Activated T-helper 1 cell treated with anti-CD3 and anti-CD28 coated beads, Interleukin-12 subunit alpha, Interleukin-12 subunit beta, Interleukin-2, Interleukin-4 antibody, amounts not matched to agents 30 ng/mL and 10 ng/mL and 1 ng/mL, durations not matched to agents 14 hours and 24 hours and 36 hours (primary cell): ENCODE measurements at regions of chr17 and their contacts with region 1.

Region 1: DNA sequence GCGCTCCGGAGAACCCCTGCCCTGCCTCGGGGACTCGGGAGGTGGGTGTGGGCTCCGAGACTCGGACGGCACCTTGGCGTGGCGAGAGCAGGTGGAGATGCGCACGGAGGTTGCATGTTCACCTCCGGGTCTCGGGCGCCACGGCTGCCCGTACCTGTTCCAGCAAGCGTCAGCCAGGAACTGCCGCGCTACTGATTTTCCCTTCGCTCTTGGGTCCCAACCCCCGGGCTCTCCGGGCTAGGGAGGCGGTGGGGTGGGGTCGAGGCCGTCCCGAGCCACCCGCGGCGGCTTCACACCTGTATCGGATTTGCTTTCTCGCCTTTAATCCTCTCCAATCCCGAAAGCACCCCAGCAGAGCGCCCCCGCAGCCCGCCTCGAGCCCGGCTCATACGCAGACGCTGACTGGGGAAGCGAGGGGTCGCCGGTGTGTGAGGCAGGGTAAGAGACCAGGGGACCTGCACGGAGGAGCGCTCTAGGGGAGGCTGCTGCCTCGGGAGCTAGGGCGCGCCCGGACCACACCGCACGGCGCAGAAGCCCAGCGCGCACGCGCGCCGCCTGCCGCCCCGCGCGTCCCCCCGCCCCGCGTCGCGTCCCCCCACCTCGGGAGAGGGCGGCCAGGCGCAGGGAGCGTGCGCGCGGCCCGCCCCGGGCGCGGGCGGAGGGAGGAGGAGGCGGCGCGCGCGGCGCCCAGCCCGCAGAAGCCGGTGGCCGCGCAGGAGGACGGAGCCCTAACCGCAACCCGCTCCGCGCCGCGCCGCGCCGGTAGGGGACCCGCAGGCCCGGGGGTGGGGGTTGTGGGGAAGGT is at the start of gene DUSP14:
- DNase-seq: peak; percentile 74
- H3K4me3 Mint-ChIP-seq: peak within 1 kb of the TSS; percentile 94
- H3K27ac Mint-ChIP-seq: peak within 1 kb of the TSS; percentile 97
- H3K4me1 Mint-ChIP-seq: peaks cover 50% of the 10 kb centered on the region
- H3K27me3 Mint-ChIP-seq: peaks cover 3% of the 10 kb centered on the region
- total RNA-seq, gene DUSP14: 21.4 and 22.3 TPM in 2 replicates

Region 2: DNA sequence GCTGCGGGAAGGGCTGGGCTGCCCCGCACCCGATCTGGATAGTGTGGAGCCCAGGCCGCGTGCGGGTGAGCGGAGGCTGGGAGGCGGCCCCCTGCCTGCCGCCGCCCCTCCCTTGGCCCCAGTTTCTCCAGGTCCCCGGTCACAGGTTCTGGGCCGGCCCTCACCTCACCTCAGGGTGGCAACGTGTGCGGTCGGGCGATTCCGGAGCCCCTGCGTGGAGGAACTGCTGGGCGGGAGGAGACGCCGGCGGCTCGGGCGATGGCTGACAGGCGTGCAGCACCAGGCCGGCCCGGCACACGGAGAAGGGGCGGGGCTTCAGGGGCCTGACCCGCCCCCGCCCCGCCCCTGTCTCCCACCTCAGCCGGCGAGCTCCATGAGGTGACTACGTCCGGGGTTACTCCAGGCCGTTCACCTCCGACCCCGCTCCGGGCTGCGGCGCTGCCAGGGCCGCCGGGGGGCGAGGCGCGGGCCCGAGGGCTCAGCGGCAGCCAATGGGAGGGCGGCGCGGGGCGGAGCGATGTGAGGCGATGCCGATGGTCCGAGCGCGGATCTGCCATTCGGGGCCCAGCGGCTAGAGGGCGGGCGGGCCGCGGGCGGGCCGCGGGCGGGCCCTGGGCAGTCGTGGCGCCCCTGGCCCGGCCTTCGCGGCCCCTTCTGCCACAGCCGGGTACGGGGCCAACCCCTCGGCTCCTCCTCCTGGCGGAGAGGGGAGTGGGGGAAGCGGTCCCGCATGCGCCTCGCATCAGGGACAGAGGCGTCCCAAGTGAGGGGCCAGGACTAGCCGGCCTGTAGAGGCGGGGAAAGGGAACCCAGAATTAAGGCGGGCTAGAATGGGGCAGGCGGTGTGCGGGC is 130.3 kb before region 1 on chr17:
- intact Hi-C with region 1: loop called (anchors 2 kb)
- DNase-seq: peak; percentile 90
- H3K4me3 Mint-ChIP-seq: peak overlapping the region; percentile 98
- H3K27ac Mint-ChIP-seq: peak overlapping the region; percentile 92
- H3K4me1 Mint-ChIP-seq: peaks cover 32% of the 10 kb centered on the region
- H3K27me3 Mint-ChIP-seq: no peaks in the 10 kb centered on the region

Region 3: GRCh38 chr17:37430051-37430627 is 59.3 kb before region 1 on chr17:
- intact Hi-C with region 1: loop called (anchors 2 kb)
- DNase-seq: no peak
- H3K4me3 Mint-ChIP-seq: peak overlapping the region; percentile 19
- H3K27ac Mint-ChIP-seq: peak overlapping the region; percentile 95
- H3K4me1 Mint-ChIP-seq: peaks cover 37% of the 10 kb centered on the region
- H3K27me3 Mint-ChIP-seq: no peaks in the 10 kb centered on the region

Region 4: GRCh38 chr17:37465069-37465616 is 24.3 kb before region 1 on chr17:
- intact Hi-C with region 1: no loop called
- DNase-seq: no peak
- H3K4me3 Mint-ChIP-seq: no peak overlapping the region
- H3K27ac Mint-ChIP-seq: no peak overlapping the region
- H3K4me1 Mint-ChIP-seq: peaks cover 21% of the 10 kb centered on the region
- H3K27me3 Mint-ChIP-seq: no peaks in the 10 kb centered on the region